ENCODE measurements at regions of chr14 and their contacts with region 1.

Region 1: GRCh38 chr14:20970983-20971704 is 15.9 kb downstream of the RNASE2 start:
- DNase-seq: peak; percentile 87
- H3K4me3 ChIP-seq: peak overlapping the region; percentile 59 to 68
- H3K27ac ChIP-seq: peak overlapping the region in 1 of 2 experiments; percentile 36; a peak in 1 of 4 replicates
- H3K4me1 ChIP-seq: peaks cover 0 to 3% of the 10 kb centered on the region in 2 experiments; a peak in 1 of 4 replicates
- H3K27me3 ChIP-seq: peaks cover 9% of the 10 kb centered on the region; the same call in 1 of the 2 replicates
- CTCF ChIP-seq: peak; percentile 91
- EP300 ChIP-seq: no peak
- RAD21 ChIP-seq: peak; percentile 62

Region 2: GRCh38 chr14:20772650-20773049 is 198.5 kb before region 1 on chr14:
- CTCF ChIA-PET with region 1: no interaction called
- POLR2A ChIA-PET with region 1: no interaction called
- DNase-seq: no peak
- H3K4me3 ChIP-seq: no peak overlapping the region
- H3K27ac ChIP-seq: no peak overlapping the region
- H3K4me1 ChIP-seq: no peaks in the 10 kb centered on the region
- H3K27me3 ChIP-seq: peaks cover 18% of the 10 kb centered on the region; the same call in 1 of the 2 replicates
- CTCF ChIP-seq: no peak
- EP300 ChIP-seq: no peak
- RAD21 ChIP-seq: no peak

Region 3: GRCh38 chr14:20837831-20838230 is 133.3 kb before region 1 on chr14:
- CTCF ChIA-PET with region 1: no interaction called
- POLR2A ChIA-PET with region 1: no interaction called
- DNase-seq: no peak
- H3K4me3 ChIP-seq: no peak overlapping the region
- H3K27ac ChIP-seq: no peak overlapping the region
- H3K4me1 ChIP-seq: no peaks in the 10 kb centered on the region
- H3K27me3 ChIP-seq: peaks cover 27% of the 10 kb centered on the region; the same call in 1 of the 2 replicates
- CTCF ChIP-seq: no peak
- EP300 ChIP-seq: no peak
- RAD21 ChIP-seq: no peak

Region 4: DNA sequence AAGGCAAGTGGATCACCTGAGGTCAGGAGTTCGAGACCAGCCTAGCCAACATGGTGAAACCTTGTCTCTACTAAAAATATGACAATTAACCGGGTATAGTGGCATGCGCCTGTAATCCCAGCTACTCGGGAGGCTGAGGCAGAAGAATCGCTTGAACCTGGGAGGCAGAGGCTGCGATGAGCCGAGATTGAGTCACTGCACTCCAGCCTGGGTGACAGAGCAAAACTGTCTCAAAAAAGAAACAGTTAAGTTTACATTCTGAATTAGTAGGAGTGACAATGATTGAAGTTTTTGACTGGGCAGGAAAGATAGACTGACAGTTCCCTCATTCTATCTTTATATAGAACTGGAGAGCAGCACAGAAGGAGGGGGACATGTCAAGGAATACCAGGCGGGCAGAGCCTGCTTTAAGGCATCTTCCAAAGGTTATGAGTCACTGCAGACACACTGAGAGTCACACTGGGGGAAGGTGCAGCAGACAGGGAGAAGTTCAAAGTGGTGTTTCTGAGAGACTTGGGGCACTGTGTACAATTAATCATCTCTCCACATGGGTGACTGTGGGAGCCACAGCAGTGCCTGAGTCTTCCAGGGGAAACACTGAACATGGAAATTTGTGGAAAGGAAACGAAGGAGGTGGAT is 122.7 kb before region 1 on chr14:
- CTCF ChIA-PET with region 1: interaction called, 11 read pairs
- POLR2A ChIA-PET with region 1: no interaction called
- DNase-seq: no peak
- H3K4me3 ChIP-seq: no peak overlapping the region
- H3K27ac ChIP-seq: no peak overlapping the region
- H3K4me1 ChIP-seq: no peaks in the 10 kb centered on the region
- H3K27me3 ChIP-seq: peaks cover 49% of the 10 kb centered on the region; the same call in 1 of the 2 replicates
- CTCF ChIP-seq: no peak
- EP300 ChIP-seq: no peak
- RAD21 ChIP-seq: no peak

Region 5: DNA sequence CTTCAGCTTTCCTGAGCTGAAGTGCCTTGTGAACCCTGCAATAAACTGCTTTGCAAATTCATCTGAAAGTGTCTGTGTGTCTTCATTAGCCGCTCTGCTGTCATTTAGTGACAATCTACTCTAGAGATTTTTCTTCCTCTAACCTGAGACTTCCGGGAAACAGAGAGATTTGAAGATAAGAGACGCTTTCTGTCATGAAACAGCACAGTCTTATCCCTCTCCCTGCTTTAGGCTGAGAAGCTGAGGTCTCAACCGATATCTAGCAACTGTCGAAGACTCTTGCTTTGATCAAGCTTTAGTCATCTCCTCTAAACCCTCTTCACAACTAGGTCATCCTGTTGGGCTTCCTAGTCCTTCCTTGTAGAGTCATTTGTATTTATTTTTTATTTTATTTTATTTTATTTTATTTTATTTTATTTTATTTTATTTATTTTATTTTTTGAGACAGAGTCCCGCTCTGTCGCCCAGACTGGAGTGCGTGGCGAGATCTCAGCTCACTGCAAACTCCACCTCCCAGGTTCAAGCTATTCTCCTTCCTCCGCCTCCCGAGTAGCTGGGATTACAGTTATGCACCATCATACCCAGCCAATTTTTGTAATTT is 14.7 kb before region 1 on chr14:
- CTCF ChIA-PET with region 1: interaction called, 31 read pairs
- POLR2A ChIA-PET with region 1: no interaction called
- DNase-seq: no peak
- H3K4me3 ChIP-seq: no peak overlapping the region
- H3K27ac ChIP-seq: no peak overlapping the region
- H3K4me1 ChIP-seq: no peaks in the 10 kb centered on the region
- H3K27me3 ChIP-seq: peaks cover 22% of the 10 kb centered on the region; the same call in 1 of the 2 replicates
- CTCF ChIP-seq: no peak
- EP300 ChIP-seq: no peak
- RAD21 ChIP-seq: no peak

Region 6: GRCh38 chr14:20989572-20990551 is 18.7 kb after region 1 on chr14 and contains the start of gene METTL17:
- CTCF ChIA-PET with region 1: interaction called, 79 read pairs
- POLR2A ChIA-PET with region 1: interaction called, 4 read pairs
- DNase-seq: peak; percentile 85
- H3K4me3 ChIP-seq: peak within 1 kb of the TSS; percentile 95 to 100
- H3K27ac ChIP-seq: peak within 1 kb of the TSS; percentile 59 to 84
- H3K4me1 ChIP-seq: peaks cover 10 to 29% of the 10 kb centered on the region in 2 experiments
- H3K27me3 ChIP-seq: no peaks in the 10 kb centered on the region
- CTCF ChIP-seq: peak; percentile 50
- EP300 ChIP-seq: no peak
- RAD21 ChIP-seq: peak; percentile 33
- polyA plus RNA-seq, gene METTL17: 104 and 144 TPM in 2 replicates

Region 7: DNA sequence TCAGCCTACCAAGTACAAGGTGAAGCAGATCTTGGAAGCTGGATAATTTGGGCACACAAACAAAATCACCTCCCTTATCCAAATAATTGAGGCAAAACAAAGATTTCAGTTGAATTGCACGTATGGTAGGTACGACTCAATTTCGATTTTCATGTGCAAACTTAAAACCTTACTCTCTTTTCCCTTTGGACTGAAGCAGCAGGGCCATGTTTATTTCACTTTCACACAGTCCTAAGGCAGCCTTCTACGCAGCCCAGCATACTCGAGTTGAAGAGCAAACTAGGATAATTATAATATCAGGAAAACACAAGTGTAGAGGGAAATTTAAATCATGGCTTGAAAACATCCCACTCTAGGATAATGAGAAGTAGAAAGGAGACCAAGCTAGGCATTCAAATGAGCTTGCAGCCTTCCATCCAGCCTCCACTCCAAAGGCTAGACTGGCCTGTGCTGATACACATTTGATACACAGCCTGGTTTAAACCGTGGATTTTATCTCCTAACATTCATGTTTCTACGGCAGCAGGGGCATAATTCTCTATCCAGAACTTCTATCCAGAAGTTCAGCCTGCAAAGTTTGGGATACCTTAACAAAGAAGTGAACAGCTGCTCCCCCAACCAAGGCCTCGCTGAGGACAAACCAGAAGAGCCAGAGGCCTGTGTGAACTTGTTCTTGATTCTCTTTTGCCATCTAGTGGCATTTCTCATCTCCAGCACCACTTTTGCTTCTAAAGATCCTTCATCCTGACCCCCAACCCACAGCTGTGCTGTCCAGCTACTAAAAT is 68.6 kb after region 1 on chr14:
- CTCF ChIA-PET with region 1: interaction called, 13 read pairs
- POLR2A ChIA-PET with region 1: no interaction called
- DNase-seq: peak; percentile 56
- H3K4me3 ChIP-seq: no peak overlapping the region; a peak in 1 of 4 replicates
- H3K27ac ChIP-seq: no peak overlapping the region
- H3K4me1 ChIP-seq: peaks cover 13 to 20% of the 10 kb centered on the region in 2 experiments; a peak in 3 of 4 replicates
- H3K27me3 ChIP-seq: no peaks in the 10 kb centered on the region; the same call in 1 of the 2 replicates
- CTCF ChIP-seq: peak; percentile 67
- EP300 ChIP-seq: no peak
- RAD21 ChIP-seq: peak; percentile 86

Region 8: DNA sequence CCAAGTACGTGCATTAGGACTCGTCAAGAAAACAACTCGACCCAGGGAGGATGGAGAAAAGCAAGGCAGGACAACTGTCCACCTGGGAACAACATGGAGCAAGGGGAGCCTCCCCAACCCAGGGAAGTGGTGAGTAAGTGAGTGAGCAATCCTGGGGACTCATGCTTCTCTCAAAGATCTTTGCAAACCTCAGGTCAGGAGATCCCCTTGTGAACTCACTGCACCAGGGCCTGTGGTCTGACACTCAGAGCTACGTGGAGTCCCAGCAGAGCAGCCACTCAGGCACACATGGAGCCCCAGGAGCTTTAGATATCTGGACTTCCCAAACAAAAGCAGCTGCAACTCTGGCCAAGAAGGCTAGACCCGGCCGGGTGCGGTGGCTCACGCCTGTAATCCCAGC is 196.9 kb after region 1 on chr14:
- CTCF ChIA-PET with region 1: no interaction called
- POLR2A ChIA-PET with region 1: no interaction called
- DNase-seq: no peak
- H3K4me3 ChIP-seq: no peak overlapping the region
- H3K27ac ChIP-seq: no peak overlapping the region
- H3K4me1 ChIP-seq: no peaks in the 10 kb centered on the region
- H3K27me3 ChIP-seq: peaks cover 16% of the 10 kb centered on the region; the same call in 1 of the 2 replicates
- CTCF ChIP-seq: no peak
- EP300 ChIP-seq: no peak
- RAD21 ChIP-seq: no peak

Measured in SK-N-SH (cell line).